ENCODE measurements at regions of chr21 and their contacts with region 1.

Region 1: GRCh38 chr21:29092102-29092959 is 18.9 kb upstream of the CCT8 start:
- DNase-seq: no peak
- H3K4me3 ChIP-seq: no peak overlapping the region
- H3K27ac ChIP-seq: no peak overlapping the region
- H3K4me1 ChIP-seq: no peaks in the 10 kb centered on the region
- H3K27me3 ChIP-seq: no peaks in the 10 kb centered on the region
- CTCF ChIP-seq: no peak
- POLR2A ChIP-seq: no peak

Region 2: GRCh38 chr21:29372063-29372802 is 279.9 kb after region 1 on chr21:
- intact Hi-C with region 1: loop called (anchors 2 kb)
- DNase-seq: peak; percentile 76
- H3K4me3 ChIP-seq: no peak overlapping the region
- H3K27ac ChIP-seq: no peak overlapping the region
- H3K4me1 ChIP-seq: no peaks in the 10 kb centered on the region
- H3K27me3 ChIP-seq: no peaks in the 10 kb centered on the region
- CTCF ChIP-seq: peak; percentile 48 to 90 (median 83)
- POLR2A ChIP-seq: no peak